GM12878 (cell line): ENCODE measurements at regions of chr10 and their contacts with region 1.

Region 1: DNA sequence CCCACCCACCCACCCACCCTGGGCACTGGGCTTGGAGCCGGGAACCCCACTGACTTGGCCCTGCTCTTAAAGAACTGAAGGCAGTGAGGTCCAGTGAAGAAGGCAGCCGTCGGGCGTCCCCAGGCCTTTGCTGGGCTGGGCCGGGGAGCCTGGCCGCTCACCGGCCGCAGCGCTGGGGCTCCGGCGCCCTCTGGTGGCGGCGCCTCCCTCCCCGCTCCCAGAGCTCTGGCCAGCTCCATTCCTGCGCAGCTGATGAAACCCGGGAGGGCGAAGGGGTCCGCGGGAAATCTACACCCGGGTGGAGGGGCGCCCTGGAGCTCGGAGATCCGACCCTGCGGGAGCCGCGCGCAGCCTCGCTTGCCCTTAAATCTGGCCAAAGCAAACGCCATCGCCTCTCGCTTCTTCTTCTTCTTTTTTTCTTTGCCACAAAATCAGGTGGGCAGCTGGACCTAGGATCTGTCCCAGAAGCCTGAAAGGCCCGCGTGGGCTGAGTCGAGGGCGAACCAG is 1.7 kb upstream of the CXCL12 start:
- DNase-seq: no peak
- ATAC-seq: peak; percentile 98
- H3K4me3 ChIP-seq: no peak overlapping the region
- H3K27ac ChIP-seq: no peak overlapping the region
- H3K4me1 ChIP-seq: no peaks in the 10 kb centered on the region
- H3K27me3 ChIP-seq: peaks cover 0 to 2% of the 10 kb centered on the region in 2 experiments; a peak in 3 of 4 replicates
- CTCF ChIP-seq: peak; percentile 71 to 90 (median 89)
- EP300 ChIP-seq: no peak
- POLR2A ChIP-seq: no peak
- RAD21 ChIP-seq: peak; percentile 90

Region 2: DNA sequence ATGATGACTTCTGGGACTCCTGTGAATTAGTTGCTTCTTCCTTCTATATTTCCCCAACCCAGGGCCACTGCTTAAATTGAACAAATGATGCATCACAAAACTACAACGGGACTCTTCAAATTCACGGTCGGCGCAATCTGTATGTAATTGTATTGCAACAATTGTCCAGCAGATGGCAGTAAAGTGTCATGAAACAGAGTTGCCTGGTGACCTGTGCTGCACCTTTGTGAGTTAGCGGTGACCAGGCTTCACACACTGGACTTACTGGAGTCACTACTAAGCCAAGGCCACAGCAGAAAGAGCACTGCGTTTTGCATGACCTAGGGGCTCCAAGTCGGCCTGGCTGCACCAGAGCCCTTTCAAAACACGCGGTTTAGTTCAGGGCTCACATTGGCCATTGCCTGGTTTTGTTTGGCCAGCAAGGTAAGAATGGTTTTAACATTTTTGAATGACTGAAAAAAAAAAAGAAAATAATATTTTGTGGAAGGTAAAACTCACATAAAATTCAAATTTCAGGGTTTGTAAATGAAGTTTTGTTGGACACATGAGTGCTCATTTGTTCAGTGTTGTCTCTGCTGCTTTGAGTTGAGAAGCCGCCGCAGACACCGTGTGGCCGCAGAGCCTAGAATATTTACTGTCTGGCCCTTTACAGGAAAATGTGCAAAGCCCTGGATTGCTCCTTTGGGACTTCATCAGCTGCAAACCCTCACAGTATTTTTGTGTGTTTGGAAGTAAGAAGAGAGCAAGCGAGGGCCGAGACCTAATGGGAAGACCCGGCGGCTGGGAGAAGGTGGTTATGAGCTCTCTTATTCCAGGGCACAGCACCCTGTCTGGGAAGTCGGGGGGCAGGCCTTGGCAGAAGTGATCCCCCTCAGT is 714.7 kb before region 1 on chr10:
- CTCF ChIA-PET with region 1: interaction called, 12 read pairs
- POLR2A ChIA-PET with region 1: no interaction called
- RAD21 ChIA-PET with region 1: interaction called, 4 read pairs
- SMC1A ChIA-PET with region 1: interaction called, 10 read pairs
- in situ Hi-C with region 1: loop called (anchors 5 kb)
- intact Hi-C with region 1: loop called (anchors 1 kb)
- DNase-seq: no peak
- ATAC-seq: peak; percentile 92
- H3K4me3 ChIP-seq: no peak overlapping the region
- H3K27ac ChIP-seq: no peak overlapping the region
- H3K4me1 ChIP-seq: no peaks in the 10 kb centered on the region
- H3K27me3 ChIP-seq: no peaks in the 10 kb centered on the region; a peak in 3 of 4 replicates
- CTCF ChIP-seq: peak; percentile 62 to 82 (median 69); a peak in 5 of 6 replicates
- EP300 ChIP-seq: no peak
- POLR2A ChIP-seq: no peak
- RAD21 ChIP-seq: peak; percentile 92

Region 3: GRCh38 chr10:44164251-44164956 is 222.2 kb before region 1 on chr10:
- CTCF ChIA-PET with region 1: no interaction called
- POLR2A ChIA-PET with region 1: no interaction called
- RAD21 ChIA-PET with region 1: no interaction called
- SMC1A ChIA-PET with region 1: no interaction called
- in situ Hi-C with region 1: no loop called
- intact Hi-C with region 1: loop called (anchors 10 kb)
- DNase-seq: no peak
- ATAC-seq: no peak
- H3K4me3 ChIP-seq: no peak overlapping the region
- H3K27ac ChIP-seq: no peak overlapping the region
- H3K4me1 ChIP-seq: no peaks in the 10 kb centered on the region
- H3K27me3 ChIP-seq: no peaks in the 10 kb centered on the region
- CTCF ChIP-seq: no peak
- EP300 ChIP-seq: no peak
- POLR2A ChIP-seq: no peak
- RAD21 ChIP-seq: no peak

Region 4: DNA sequence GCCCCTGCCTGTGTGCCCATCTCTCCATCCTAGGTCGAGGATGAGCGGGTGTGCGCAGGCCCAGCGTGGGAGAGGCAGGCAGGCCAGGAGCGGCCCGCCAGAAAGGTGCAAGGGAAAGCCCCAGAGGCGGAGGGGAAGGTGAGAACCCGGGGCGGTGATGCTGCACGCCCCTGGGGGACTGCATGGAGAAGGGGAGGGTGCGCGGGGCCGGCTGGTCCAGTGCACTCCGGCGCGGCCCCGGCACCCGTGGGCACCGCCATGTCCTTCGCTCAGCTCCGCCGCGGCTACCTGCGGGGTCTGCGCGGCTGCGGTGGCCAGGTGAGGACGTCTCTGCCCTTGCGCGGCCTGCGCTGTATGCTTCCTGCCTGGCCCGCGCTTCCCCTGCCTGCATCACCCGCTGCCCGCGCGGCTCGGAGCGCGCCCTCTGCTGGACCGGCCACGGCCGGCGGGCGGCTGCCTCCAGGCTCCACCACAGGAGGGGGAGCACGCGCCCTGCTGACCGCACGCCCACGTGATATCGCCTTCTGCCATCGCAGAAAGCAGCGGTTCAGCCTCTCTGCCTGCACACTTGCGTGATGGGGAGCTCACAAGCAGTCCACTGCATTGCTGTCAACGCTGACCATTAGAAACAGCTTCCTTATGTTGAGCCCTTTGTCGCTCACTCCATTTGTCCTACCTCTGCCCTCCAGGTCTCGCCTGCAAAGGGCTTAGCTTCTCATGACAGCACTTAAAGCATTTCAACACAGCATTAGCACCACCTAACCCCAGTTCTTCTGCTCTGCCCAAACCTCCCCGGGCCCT is 75.6 kb before region 1 on chr10:
- CTCF ChIA-PET with region 1: interaction called, 4 read pairs
- POLR2A ChIA-PET with region 1: no interaction called
- RAD21 ChIA-PET with region 1: no interaction called
- SMC1A ChIA-PET with region 1: no interaction called
- in situ Hi-C with region 1: no loop called
- intact Hi-C with region 1: loop called (anchors 5 kb)
- DNase-seq: no peak
- ATAC-seq: peak; percentile 88
- H3K4me3 ChIP-seq: no peak overlapping the region; the same call in 1 of the 2 replicates
- H3K27ac ChIP-seq: no peak overlapping the region
- H3K4me1 ChIP-seq: peaks cover 29% of the 10 kb centered on the region
- H3K27me3 ChIP-seq: no peaks in the 10 kb centered on the region
- CTCF ChIP-seq: peak; percentile 65 to 84 (median 66); a peak in 5 of 6 replicates
- EP300 ChIP-seq: no peak
- POLR2A ChIP-seq: peak; percentile 51; the same call in 1 of the 2 replicates
- RAD21 ChIP-seq: peak; percentile 49

Region 5: GRCh38 chr10:44352316-44353127 is 34.1 kb before region 1 on chr10:
- CTCF ChIA-PET with region 1: no interaction called
- POLR2A ChIA-PET with region 1: no interaction called
- RAD21 ChIA-PET with region 1: no interaction called
- SMC1A ChIA-PET with region 1: no interaction called
- in situ Hi-C with region 1: no loop called
- intact Hi-C with region 1: loop called (anchors 5 kb)
- DNase-seq: no peak
- ATAC-seq: no peak
- H3K4me3 ChIP-seq: no peak overlapping the region
- H3K27ac ChIP-seq: no peak overlapping the region
- H3K4me1 ChIP-seq: no peaks in the 10 kb centered on the region
- H3K27me3 ChIP-seq: peaks cover 0 to 2% of the 10 kb centered on the region in 2 experiments; a peak in 1 of 4 replicates
- CTCF ChIP-seq: no peak
- EP300 ChIP-seq: no peak
- POLR2A ChIP-seq: no peak
- RAD21 ChIP-seq: no peak

Region 6: DNA sequence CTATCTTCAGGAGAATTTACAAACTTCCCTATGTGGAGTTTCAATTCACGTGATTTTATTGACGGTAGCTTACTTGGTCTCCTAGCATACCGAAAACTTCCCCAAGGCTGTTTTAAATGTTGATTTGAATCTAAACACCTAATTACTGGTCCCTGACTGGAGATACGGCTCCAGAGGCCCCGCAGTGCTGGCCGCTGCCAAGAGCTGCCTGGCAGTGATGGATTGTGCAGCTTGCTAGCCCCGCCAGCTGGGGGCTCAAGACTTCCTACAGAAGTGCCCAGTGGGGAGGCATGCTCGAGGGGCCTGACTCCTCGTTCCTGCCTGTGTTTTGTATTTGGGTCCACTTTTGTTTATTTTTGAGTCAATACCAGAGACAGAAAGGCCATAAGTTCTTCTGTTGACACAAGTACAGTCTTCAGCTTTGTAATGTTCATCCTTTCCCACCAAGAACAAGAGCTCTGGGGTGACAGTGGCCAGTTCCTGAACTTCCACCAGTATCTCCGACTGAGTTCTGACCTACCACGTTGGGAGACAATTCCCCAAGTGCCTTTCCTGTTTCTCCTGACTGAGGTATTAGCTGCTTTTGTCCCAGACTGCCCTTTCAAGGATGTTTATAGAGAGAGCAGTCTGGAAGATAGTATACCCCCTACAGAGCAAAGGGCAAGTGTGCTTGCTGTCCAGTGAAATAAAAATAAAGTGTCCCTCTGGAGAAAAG is 79.0 kb after region 1 on chr10:
- CTCF ChIA-PET with region 1: no interaction called
- POLR2A ChIA-PET with region 1: no interaction called
- RAD21 ChIA-PET with region 1: no interaction called
- SMC1A ChIA-PET with region 1: no interaction called
- in situ Hi-C with region 1: no loop called
- intact Hi-C with region 1: no loop called
- DNase-seq: no peak
- ATAC-seq: no peak
- H3K4me3 ChIP-seq: no peak overlapping the region
- H3K27ac ChIP-seq: no peak overlapping the region
- H3K4me1 ChIP-seq: no peaks in the 10 kb centered on the region
- H3K27me3 ChIP-seq: no peaks in the 10 kb centered on the region; a peak in 2 of 4 replicates
- CTCF ChIP-seq: no peak
- EP300 ChIP-seq: no peak
- POLR2A ChIP-seq: no peak
- RAD21 ChIP-seq: no peak

Region 7: GRCh38 chr10:44864637-44865288 is 478.2 kb after region 1 on chr10:
- CTCF ChIA-PET with region 1: interaction called, 3 read pairs
- POLR2A ChIA-PET with region 1: no interaction called
- RAD21 ChIA-PET with region 1: interaction called, 4 read pairs
- SMC1A ChIA-PET with region 1: no interaction called
- in situ Hi-C with region 1: loop called (anchors 25 kb)
- intact Hi-C with region 1: loop called (anchors 10 kb)
- DNase-seq: peak; percentile 20
- ATAC-seq: peak; percentile 98
- H3K4me3 ChIP-seq: peak overlapping the region; percentile 39; the same call in 1 of the 2 replicates
- H3K27ac ChIP-seq: no peak overlapping the region
- H3K4me1 ChIP-seq: peaks cover 8% of the 10 kb centered on the region; the same call in 1 of the 2 replicates
- H3K27me3 ChIP-seq: peaks cover 2% of the 10 kb centered on the region in 2 experiments; a peak in 3 of 4 replicates
- CTCF ChIP-seq: peak; percentile 87 to 94 (median 89)
- EP300 ChIP-seq: no peak
- POLR2A ChIP-seq: no peak
- RAD21 ChIP-seq: peak; percentile 60